CD8-positive, alpha-beta T cell (primary cell): ENCODE measurements at regions of chr11 and their contacts with region 1.

Region 1: GRCh38 chr11:65569973-65570918 is at the start of gene ZNRD2:
- DNase-seq: peak; percentile 96 to 99 (median 98)
- ATAC-seq: peak; percentile 69
- H3K4me3 ChIP-seq: peak within 1 kb of the TSS; percentile 92 to 94
- H3K4me3 Mint-ChIP-seq: peak within 1 kb of the TSS; percentile 99
- H3K27ac ChIP-seq: peak within 1 kb of the TSS; percentile 94 to 99
- H3K27ac Mint-ChIP-seq: peak within 1 kb of the TSS; percentile 99
- H3K4me1 ChIP-seq: peaks cover 76% of the 10 kb centered on the region
- H3K4me1 Mint-ChIP-seq: peaks cover 76% of the 10 kb centered on the region
- H3K27me3 ChIP-seq: no peaks in the 10 kb centered on the region
- H3K27me3 Mint-ChIP-seq: no peaks in the 10 kb centered on the region
- CTCF ChIP-seq: no peak
- total RNA-seq, gene ZNRD2: 35.6 to 41.4 TPM

Region 2: DNA sequence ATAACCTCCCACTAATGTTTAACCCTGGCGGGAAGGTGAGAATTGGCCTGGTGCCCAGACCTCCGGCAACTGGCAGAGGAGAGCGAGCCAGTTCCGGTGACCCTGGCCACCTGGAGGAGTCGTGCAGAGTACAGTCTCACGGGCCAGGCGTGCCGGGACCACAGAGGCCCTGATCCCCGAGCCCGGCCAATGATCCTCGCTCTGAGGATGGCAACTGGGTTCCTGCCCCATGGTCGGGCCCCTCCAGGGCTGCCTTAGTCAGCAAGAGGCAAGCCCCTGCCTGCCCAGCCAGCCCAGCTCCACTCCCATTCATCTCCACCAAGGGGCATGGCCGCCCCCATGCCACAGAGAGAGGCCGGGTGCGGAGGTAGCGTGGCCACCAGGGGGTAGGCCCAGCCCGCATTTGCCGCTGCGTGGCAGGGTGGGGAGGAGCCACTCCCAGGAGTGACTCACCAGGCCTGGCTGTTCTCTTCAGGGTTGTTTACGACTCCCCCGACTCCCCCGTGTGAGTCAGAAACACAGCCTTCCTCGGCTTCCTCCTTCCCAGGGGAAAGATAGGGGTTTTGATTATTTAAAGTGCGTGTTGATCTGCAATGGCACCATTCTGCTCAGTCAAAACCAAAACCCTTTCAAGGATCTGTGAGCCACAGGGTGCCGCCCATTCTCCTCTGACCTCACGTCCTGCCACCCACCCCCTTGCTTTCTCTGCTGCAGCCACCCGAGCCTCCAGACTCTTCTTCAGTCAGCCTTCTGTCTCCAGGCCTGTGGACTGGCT is 188.0 kb before region 1 on chr11 and contains the start of gene SLC25A45:
- CTCF ChIA-PET with region 1: no interaction called
- POLR2A ChIA-PET with region 1: no interaction called
- intact Hi-C with region 1: loop called (anchors 5 kb)
- DNase-seq: peak; percentile 77 to 96 (median 92)
- ATAC-seq: peak; percentile 83
- H3K4me3 ChIP-seq: peak within 1 kb of the TSS; percentile 60 to 98
- H3K4me3 Mint-ChIP-seq: peak within 1 kb of the TSS; percentile 87
- H3K27ac ChIP-seq: peak within 1 kb of the TSS; percentile 97 to 100
- H3K27ac Mint-ChIP-seq: peak within 1 kb of the TSS; percentile 99
- H3K4me1 ChIP-seq: peaks cover 54% of the 10 kb centered on the region
- H3K4me1 Mint-ChIP-seq: peaks cover 42% of the 10 kb centered on the region
- H3K27me3 ChIP-seq: no peaks in the 10 kb centered on the region
- H3K27me3 Mint-ChIP-seq: no peaks in the 10 kb centered on the region
- CTCF ChIP-seq: peak; percentile 81
- total RNA-seq, gene SLC25A45: 27.8 to 29.6 TPM

Region 3: GRCh38 chr11:65524741-65525545 is 45.3 kb before region 1 on chr11 and contains the start of gene SCYL1:
- CTCF ChIA-PET with region 1: interaction called, 7 read pairs
- POLR2A ChIA-PET with region 1: interaction called, 6 read pairs
- intact Hi-C with region 1: loop called in 1 of 2 experiments (anchors 2 kb)
- DNase-seq: peak; percentile 77 to 92 (median 83)
- ATAC-seq: peak; percentile 93
- H3K4me3 ChIP-seq: peak within 1 kb of the TSS; percentile 73 to 89
- H3K4me3 Mint-ChIP-seq: peak within 1 kb of the TSS; percentile 84
- H3K27ac ChIP-seq: peak within 1 kb of the TSS; percentile 53 to 68
- H3K27ac Mint-ChIP-seq: peak within 1 kb of the TSS; percentile 91
- H3K4me1 ChIP-seq: peaks cover 60% of the 10 kb centered on the region
- H3K4me1 Mint-ChIP-seq: peaks cover 52% of the 10 kb centered on the region
- H3K27me3 ChIP-seq: no peaks in the 10 kb centered on the region
- H3K27me3 Mint-ChIP-seq: no peaks in the 10 kb centered on the region
- CTCF ChIP-seq: no peak
- total RNA-seq, gene SCYL1: 55.8 to 60.4 TPM

Region 4: DNA sequence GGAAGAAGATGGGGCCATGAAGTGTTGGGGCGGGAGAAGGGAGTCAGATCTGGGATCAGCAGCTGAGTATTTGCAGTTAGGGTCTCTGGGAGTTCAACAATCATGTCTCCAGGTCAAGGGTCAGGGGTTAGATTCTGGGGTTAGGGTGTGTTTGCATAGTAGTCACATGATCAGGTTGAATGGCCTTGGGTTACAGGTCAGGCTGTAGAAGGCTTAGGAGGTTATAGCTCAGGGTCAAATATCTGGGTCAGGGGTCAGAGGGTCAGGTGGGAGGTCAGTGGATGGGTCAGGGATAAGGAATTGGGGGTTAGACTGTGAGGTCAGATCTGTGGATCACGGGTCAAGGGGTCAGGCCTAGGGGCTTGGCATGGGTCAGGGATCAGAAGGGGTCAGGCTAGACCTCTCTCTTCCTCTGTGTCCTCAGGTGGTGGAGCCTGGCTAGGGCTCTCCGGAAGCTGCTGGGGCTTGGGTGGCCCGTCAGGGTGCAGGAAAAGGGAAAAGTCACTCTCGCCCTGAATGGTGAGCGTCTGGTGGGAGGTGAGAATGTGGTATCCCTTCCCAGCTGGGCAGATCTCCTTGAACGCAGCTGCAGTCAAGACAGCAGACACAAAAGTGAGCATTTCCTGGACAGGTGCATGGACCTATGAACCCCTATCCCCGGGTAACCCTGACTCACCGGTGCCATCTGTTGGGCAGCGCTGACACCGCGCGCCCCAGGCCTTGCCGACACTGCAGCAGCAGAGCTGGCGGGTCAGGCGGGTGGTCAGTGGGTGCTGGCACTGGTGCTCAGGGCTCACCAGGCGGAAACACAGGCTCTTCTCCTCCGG is 18.5 kb before region 1 on chr11:
- CTCF ChIA-PET with region 1: interaction called, 47 read pairs
- POLR2A ChIA-PET with region 1: interaction called, 16 read pairs
- intact Hi-C with region 1: loop called (anchors 1 kb)
- DNase-seq: peak in 7 of 9 experiments; percentile 51 to 80 (median 71)
- ATAC-seq: peak; percentile 26
- H3K4me3 ChIP-seq: no peak overlapping the region
- H3K4me3 Mint-ChIP-seq: peak overlapping the region; percentile 17
- H3K27ac ChIP-seq: no peak overlapping the region
- H3K27ac Mint-ChIP-seq: peak overlapping the region; percentile 69
- H3K4me1 ChIP-seq: peaks cover 78% of the 10 kb centered on the region
- H3K4me1 Mint-ChIP-seq: peaks cover 75% of the 10 kb centered on the region
- H3K27me3 ChIP-seq: no peaks in the 10 kb centered on the region
- H3K27me3 Mint-ChIP-seq: no peaks in the 10 kb centered on the region
- CTCF ChIP-seq: peak; percentile 53

Region 5: DNA sequence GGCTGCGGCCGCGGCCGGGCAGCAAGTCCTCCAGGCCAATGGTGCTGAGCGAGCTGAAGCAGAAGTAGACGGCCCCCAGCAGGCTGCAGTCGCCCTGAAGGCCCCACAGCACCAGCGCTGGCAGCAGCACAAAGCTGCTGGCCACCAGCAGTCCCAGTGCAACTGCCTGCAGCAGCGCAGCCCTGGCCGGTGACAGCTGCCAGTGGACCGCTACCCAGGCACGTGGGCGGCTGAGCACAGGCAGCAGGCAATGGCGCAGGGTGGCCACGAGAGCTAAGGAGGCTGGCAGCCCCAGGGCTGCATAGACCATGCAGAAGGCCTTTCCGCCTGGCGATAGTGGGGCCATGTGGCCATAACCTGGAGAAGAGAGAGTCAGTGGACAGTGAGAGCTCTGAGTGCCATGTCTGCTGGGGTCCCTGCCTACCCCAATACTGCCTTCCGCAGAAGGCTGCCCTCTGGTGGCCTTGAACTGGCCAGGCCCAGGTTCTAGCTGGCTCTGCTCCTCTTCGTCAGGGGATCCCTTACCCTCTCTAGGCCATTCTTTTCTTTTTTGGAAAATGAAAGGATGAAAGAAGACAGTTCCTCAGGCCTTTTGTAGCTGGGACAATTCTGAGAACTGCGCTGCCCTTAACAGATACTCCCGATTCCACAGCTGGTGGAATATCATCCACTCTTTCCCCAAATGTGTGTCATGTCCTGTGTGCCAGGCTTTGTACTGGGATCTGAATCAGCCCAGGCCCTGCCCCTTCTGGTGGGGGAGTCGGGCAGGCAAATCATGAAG is 23.5 kb after region 1 on chr11:
- CTCF ChIA-PET with region 1: interaction called, 43 read pairs
- POLR2A ChIA-PET with region 1: interaction called, 30 read pairs
- intact Hi-C with region 1: loop called (anchors 1 kb)
- DNase-seq: peak in 7 of 9 experiments; percentile 48 to 74 (median 64)
- ATAC-seq: peak; percentile 56
- H3K4me3 ChIP-seq: no peak overlapping the region
- H3K4me3 Mint-ChIP-seq: no peak overlapping the region
- H3K27ac ChIP-seq: no peak overlapping the region
- H3K27ac Mint-ChIP-seq: no peak overlapping the region
- H3K4me1 ChIP-seq: peaks cover 12% of the 10 kb centered on the region
- H3K4me1 Mint-ChIP-seq: peaks cover 11% of the 10 kb centered on the region
- H3K27me3 ChIP-seq: no peaks in the 10 kb centered on the region
- H3K27me3 Mint-ChIP-seq: no peaks in the 10 kb centered on the region
- CTCF ChIP-seq: peak; percentile 59

Region 6: GRCh38 chr11:65711785-65712632 is 141.8 kb after region 1 on chr11 and contains the start of gene KAT5:
- CTCF ChIA-PET with region 1: interaction called, 3 read pairs
- POLR2A ChIA-PET with region 1: interaction called, 3 read pairs
- intact Hi-C with region 1: loop called in 1 of 2 experiments (anchors 1 kb)
- DNase-seq: peak; percentile 95 to 99 (median 98)
- ATAC-seq: peak; percentile 83
- H3K4me3 ChIP-seq: peak within 1 kb of the TSS; percentile 92 to 99
- H3K4me3 Mint-ChIP-seq: peak within 1 kb of the TSS; percentile 95
- H3K27ac ChIP-seq: peak within 1 kb of the TSS; percentile 99 to 100
- H3K27ac Mint-ChIP-seq: peak within 1 kb of the TSS; percentile 100
- H3K4me1 ChIP-seq: peaks cover 14% of the 10 kb centered on the region
- H3K4me1 Mint-ChIP-seq: peaks cover 21% of the 10 kb centered on the region
- H3K27me3 ChIP-seq: no peaks in the 10 kb centered on the region
- H3K27me3 Mint-ChIP-seq: no peaks in the 10 kb centered on the region
- CTCF ChIP-seq: peak; percentile 95
- total RNA-seq, gene KAT5: 149 to 151 TPM